BJ (cell line): ENCODE measurements at regions of chr6 and their contacts with region 1.

Region 1: GRCh38 chr6:27078734-27079357 is 168.7 kb upstream of the PRSS16 start:
- DNase-seq: peak; percentile 4
- H3K4me3 ChIP-seq: peak overlapping the region; percentile 14
- H3K27me3 ChIP-seq: no peaks in the 10 kb centered on the region
- CTCF ChIP-seq: peak; percentile 67

Region 2: DNA sequence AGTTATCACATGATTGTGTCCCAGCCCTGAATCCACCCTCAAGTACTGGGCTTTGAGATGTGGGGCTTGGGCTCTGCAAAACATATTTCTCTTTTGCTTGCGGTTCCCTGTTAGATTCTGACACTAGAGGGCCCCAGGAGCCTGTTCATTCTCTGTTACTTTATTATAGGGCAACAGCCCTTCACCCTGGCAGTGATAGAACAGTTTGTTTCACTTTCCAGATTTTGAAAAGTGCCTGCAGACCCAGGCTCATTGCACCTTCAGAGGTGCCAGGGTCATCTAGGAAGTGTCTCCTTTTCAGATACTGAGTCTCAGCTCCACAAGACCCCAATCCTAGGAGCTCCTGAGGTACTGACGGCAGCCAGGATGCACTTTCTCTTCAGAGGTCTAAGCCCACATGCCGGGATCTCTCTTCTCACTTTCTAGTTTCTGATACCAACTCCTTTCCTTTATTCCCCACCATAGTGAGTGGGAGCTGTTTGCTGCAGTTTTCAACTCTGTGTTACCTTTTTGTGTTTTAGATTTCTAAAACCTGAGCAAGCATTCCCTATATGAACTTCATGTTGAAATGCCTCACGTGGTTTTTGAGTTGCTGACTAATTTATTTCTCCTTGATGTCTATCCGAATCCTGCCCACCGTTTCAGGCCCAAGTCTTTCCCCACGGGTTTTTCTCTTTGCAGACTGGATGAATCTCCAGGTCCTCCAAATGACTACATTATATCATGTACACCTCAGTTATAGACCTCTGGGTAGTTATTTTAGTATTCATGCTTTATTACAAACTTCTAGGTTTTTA is 471.2 kb before region 1 on chr6:
- CTCF ChIA-PET with region 1: interaction called, 22 read pairs
- POLR2A ChIA-PET with region 1: no interaction called
- DNase-seq: no peak
- H3K4me3 ChIP-seq: no peak overlapping the region
- H3K27me3 ChIP-seq: peaks cover 5% of the 10 kb centered on the region
- CTCF ChIP-seq: peak; percentile 83

Region 3: DNA sequence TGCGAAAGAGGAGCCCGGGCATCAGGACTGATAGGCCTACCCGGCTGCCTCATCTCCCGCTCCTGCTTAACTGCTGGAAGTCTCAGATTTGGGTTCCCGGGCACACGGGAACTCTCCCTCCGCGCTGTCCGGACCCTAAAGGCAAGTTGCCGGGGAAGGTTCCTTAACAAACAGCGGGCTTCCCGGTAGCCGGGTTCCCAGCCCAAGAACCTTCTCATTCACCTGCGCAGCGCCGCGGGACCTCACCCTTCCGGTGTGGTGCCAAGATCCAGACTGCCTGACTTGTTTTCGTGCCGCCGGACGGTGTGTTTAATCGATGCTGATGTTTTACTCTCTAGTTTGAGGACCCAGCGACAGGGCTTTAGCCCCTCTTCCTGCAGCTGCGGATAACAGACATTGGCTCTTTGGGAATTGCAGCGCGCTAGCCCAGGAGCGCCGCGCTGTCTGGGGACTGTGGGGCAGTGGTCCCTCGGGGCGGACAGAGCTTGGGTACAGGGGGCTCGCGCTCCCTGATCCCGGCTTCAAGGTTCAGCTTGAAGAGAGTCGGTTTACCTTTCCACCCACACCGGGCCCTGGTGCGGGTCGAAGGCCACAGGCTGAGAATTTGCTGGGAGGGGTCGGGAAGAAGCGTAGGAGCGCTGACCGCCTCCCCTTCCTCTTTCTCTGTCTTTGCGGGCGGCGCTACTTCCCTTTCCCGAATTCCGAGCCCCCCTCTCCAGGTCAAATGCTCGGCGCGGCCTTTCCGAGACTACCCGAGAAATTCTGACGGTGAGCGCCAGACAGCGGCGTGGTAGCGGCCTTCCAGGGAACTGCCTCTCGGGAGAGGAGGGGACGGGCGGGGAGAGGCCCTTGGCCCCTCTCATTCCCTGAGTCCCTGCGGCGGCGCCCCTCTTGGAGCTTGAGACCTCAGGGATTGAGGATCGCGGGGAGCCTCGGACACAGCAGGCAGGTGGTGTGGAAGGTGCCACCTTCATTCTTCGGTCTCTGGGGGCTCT is 464.9 kb before region 1 on chr6:
- CTCF ChIA-PET with region 1: interaction called, 10 read pairs
- POLR2A ChIA-PET with region 1: no interaction called
- DNase-seq: no peak
- H3K4me3 ChIP-seq: no peak overlapping the region
- H3K27me3 ChIP-seq: peaks cover 24% of the 10 kb centered on the region
- CTCF ChIP-seq: no peak

Region 4: DNA sequence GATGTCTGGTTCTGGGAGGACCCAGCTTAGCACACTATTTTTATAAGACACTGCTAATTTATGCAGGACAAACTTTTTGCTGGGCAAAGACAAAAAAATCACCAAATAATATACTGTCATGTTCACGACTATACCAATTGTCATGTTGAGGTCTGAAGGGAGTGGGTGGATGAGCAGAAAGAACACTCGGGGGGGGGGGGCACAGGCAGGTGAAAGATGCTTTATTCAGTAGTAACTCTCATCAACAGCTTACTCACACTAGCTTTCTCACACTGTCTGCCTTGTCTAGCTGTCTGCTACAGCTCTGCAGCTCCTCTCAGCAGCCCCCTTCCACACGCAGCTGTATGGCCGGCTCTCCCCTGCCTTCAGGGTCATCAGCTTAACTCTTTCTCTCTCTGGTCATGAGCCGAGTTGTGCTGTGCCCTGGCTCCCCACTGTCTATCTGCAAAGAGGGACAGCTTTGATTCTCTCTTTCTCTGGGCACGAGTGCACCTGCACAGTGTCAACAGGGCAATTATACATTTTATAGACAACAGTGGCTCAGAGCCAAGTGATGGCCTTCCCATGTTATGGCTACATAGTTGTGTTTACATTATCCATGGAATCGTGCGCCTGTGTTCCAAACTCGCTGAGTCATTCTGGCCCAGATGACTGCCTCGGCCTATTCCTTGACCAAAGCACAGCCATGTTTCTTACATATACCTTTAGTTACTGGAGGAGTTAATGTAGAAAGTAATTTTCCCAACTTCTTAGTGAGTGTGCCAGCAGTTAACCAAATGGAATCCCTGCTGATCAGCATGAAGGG is 19.0 kb before region 1 on chr6:
- CTCF ChIA-PET with region 1: interaction called, 10 read pairs
- POLR2A ChIA-PET with region 1: no interaction called
- DNase-seq: no peak
- H3K4me3 ChIP-seq: no peak overlapping the region
- H3K27me3 ChIP-seq: no peaks in the 10 kb centered on the region
- CTCF ChIP-seq: no peak